Natural killer cell (primary cell): ENCODE measurements at regions of chr15 and their contacts with region 1.

Region 1: GRCh38 chr15:101333401-101333800 is 38.4 kb upstream of the SNRPA1 start:
- DNase-seq: peak in 1 of 2 donors; percentile 34
- ATAC-seq: peak in 1 of 3 donors; percentile 4
- H3K4me3 ChIP-seq: no peak overlapping the region
- H3K4me3 Mint-ChIP-seq: peak overlapping the region; percentile 7
- H3K27ac ChIP-seq: peak overlapping the region; percentile 91
- H3K27ac Mint-ChIP-seq: peak overlapping the region; percentile 85 to 90
- H3K4me1 ChIP-seq: peaks cover 20% of the 10 kb centered on the region
- H3K4me1 Mint-ChIP-seq: peaks cover 27 to 30% of the 10 kb centered on the region in 2 donors
- H3K27me3 ChIP-seq: no peaks in the 10 kb centered on the region
- H3K27me3 Mint-ChIP-seq: peaks cover 11 to 12% of the 10 kb centered on the region in 2 donors
- CTCF ChIP-seq: no peak

Region 2: GRCh38 chr15:101138913-101139880 is 194.2 kb before region 1 on chr15:
- intact Hi-C with region 1: no loop called
- DNase-seq: no peak
- ATAC-seq: no peak
- H3K4me3 ChIP-seq: no peak overlapping the region
- H3K4me3 Mint-ChIP-seq: no peak overlapping the region
- H3K27ac ChIP-seq: no peak overlapping the region
- H3K27ac Mint-ChIP-seq: peak overlapping the region in 1 of 2 donors; percentile 67
- H3K4me1 ChIP-seq: peaks cover 38% of the 10 kb centered on the region
- H3K4me1 Mint-ChIP-seq: peaks cover 35 to 36% of the 10 kb centered on the region in 2 donors
- H3K27me3 ChIP-seq: no peaks in the 10 kb centered on the region
- H3K27me3 Mint-ChIP-seq: no peaks in the 10 kb centered on the region
- CTCF ChIP-seq: no peak

Region 3: GRCh38 chr15:101320501-101321052 is 12.8 kb before region 1 on chr15:
- intact Hi-C with region 1: loop called (anchors 1 kb)
- DNase-seq: peak; percentile 64 to 84
- ATAC-seq: peak; percentile 95 to 98 (median 98)
- H3K4me3 ChIP-seq: peak overlapping the region; percentile 22
- H3K4me3 Mint-ChIP-seq: peak overlapping the region; percentile 86
- H3K27ac ChIP-seq: peak overlapping the region; percentile 82
- H3K27ac Mint-ChIP-seq: peak overlapping the region; percentile 95
- H3K4me1 ChIP-seq: peaks cover 24% of the 10 kb centered on the region
- H3K4me1 Mint-ChIP-seq: peaks cover 18 to 20% of the 10 kb centered on the region in 2 donors
- H3K27me3 ChIP-seq: no peaks in the 10 kb centered on the region
- H3K27me3 Mint-ChIP-seq: no peaks in the 10 kb centered on the region
- CTCF ChIP-seq: peak; percentile 73